ENCODE measurements at regions of chr5 and their contacts with region 1.

Region 1: DNA sequence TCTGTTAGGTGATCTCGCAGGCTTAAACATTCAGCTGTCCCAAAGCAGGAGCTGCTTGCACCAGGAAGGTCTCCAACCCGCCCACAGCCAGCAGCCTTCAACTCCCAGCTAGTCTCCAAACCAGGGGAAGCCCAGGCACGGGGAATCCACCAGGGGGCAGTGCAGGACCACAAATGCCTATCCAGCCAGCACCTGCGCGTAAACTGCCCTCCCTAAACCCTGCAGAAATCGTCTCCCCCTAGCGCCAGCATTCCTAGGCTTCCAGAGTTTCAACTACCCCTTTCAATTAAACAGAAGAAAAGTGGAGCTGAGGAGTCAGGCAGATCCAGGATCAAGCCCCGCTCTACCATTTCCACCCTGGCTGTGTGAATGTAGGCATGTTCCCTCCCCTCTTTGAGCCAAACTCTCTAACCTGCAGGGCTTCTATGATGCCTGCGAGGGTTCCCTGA is 72.0 kb downstream of the HRH2 start:
- DNase-seq: peak; percentile 94
- H3K4me3 Mint-ChIP-seq: no peak overlapping the region
- H3K27ac Mint-ChIP-seq: no peak overlapping the region
- H3K4me1 Mint-ChIP-seq: peaks cover 7% of the 10 kb centered on the region
- H3K27me3 Mint-ChIP-seq: peaks cover 20% of the 10 kb centered on the region

Region 2: DNA sequence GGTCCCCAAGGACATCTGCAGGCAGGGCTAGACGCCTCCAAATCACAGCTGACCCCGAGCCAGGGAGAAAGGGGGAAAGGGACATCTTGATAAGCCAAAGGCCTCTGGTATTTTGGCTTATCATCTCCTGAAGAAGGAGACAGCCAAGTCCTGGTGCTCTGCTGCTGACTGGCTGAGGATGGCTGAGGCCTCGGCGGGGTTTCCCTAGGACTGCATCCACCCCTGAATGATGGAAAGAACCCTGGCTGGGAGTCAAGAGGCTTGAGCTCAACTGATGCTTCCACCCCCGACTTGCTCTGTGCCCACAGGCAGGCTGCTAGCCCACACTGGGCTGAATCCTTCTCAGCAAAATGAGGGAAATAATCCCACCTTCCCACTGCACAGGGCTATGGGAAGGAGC is 102.8 kb before region 1 on chr5:
- CTCF ChIA-PET with region 1: no interaction called
- POLR2A ChIA-PET with region 1: no interaction called
- intact Hi-C with region 1: no loop called
- DNase-seq: no peak
- H3K4me3 Mint-ChIP-seq: no peak overlapping the region
- H3K27ac Mint-ChIP-seq: no peak overlapping the region
- H3K4me1 Mint-ChIP-seq: no peaks in the 10 kb centered on the region
- H3K27me3 Mint-ChIP-seq: no peaks in the 10 kb centered on the region

Region 3: GRCh38 chr5:175696139-175696854 is 33.6 kb before region 1 on chr5:
- CTCF ChIA-PET with region 1: interaction called, 10 read pairs
- POLR2A ChIA-PET with region 1: no interaction called
- intact Hi-C with region 1: no loop called
- DNase-seq: peak; percentile 92
- H3K4me3 Mint-ChIP-seq: peak overlapping the region; percentile 60
- H3K27ac Mint-ChIP-seq: peak overlapping the region; percentile 90
- H3K4me1 Mint-ChIP-seq: peaks cover 16% of the 10 kb centered on the region
- H3K27me3 Mint-ChIP-seq: no peaks in the 10 kb centered on the region